MCF 10A (cell line): ENCODE measurements at regions of chr20 and their contacts with region 1.

Region 1: GRCh38 chr20:34768096-34768495 is 57.4 kb downstream of the NCOA6 start:
- DNase-seq: no peak
- H3K4me3 Mint-ChIP-seq: no peak overlapping the region
- H3K27ac Mint-ChIP-seq: no peak overlapping the region
- H3K4me1 Mint-ChIP-seq: peaks cover 6% of the 10 kb centered on the region
- H3K27me3 Mint-ChIP-seq: no peaks in the 10 kb centered on the region
- CTCF ChIP-seq: no peak

Region 2: GRCh38 chr20:34538671-34539123 is 229.4 kb before region 1 on chr20:
- CTCF ChIA-PET with region 1: interaction called, 6 read pairs
- POLR2A ChIA-PET with region 1: no interaction called
- intact Hi-C with region 1: loop called (anchors 1 kb)
- DNase-seq: peak; percentile 62
- H3K4me3 Mint-ChIP-seq: no peak overlapping the region
- H3K27ac Mint-ChIP-seq: no peak overlapping the region
- H3K4me1 Mint-ChIP-seq: no peaks in the 10 kb centered on the region
- H3K27me3 Mint-ChIP-seq: no peaks in the 10 kb centered on the region
- CTCF ChIP-seq: peak; percentile 75

Region 3: DNA sequence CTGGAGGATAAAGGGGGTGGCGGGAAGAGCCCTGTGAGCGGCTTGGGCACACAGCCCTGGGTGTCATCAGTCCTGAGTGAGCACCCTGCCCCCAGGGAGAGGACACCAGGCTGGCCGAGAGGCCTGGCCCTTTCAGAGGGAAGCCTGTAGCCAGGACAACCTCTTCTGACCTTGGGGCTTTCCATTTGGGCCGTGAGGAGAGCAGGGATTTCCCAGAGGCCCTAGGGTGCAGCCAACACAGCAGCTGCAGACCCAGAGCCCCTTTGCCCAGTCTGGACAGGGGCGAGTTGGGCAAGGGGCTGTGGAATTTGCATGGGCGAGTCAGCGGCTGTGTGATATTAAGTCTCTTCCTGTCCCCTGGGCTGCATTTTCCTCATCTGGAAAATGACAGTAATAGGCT is 203.3 kb before region 1 on chr20:
- CTCF ChIA-PET with region 1: interaction called, 11 read pairs
- POLR2A ChIA-PET with region 1: interaction called, 4 read pairs
- intact Hi-C with region 1: no loop called
- DNase-seq: no peak
- H3K4me3 Mint-ChIP-seq: no peak overlapping the region
- H3K27ac Mint-ChIP-seq: no peak overlapping the region
- H3K4me1 Mint-ChIP-seq: no peaks in the 10 kb centered on the region
- H3K27me3 Mint-ChIP-seq: no peaks in the 10 kb centered on the region
- CTCF ChIP-seq: no peak

Region 4: DNA sequence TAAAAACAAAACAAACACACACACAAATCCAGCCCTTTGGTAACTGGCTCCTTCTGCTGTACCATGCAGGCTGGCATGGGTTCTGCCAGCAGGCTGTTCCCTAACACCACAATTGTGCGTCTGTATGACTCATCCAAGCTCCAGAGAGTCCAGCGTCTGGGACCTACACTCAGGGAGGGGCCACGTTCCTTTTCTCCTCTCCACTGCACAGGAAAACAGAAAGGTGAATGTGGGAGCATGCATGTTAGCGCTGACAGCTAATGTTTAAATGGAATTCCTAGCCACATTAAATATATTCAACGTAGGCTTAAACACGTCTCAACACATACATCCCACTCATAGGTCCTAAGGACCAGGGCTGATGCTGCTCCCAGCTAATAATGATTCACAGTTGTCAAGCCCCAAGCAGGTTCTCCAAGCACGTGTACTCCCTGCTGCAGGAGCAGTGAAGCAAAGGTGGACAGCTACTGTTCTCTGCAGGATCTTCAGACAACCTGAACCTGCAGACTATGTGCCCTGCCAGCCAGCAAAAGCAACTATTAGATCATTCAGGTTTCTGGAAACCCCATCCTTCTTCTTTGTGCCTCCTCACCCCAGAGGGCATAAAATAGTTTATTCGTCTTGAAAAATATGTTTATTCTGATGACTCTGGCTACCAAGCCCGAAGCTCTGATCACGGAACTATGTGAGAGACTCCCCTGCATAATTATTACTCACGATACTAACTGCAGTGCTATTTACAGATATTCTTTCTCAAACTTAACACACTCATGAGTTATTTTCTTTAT is 188.7 kb before region 1 on chr20:
- CTCF ChIA-PET with region 1: interaction called, 136 read pairs
- POLR2A ChIA-PET with region 1: interaction called, 13 read pairs
- intact Hi-C with region 1: loop called (anchors 1 kb)
- DNase-seq: peak; percentile 88
- H3K4me3 Mint-ChIP-seq: peak overlapping the region; percentile 11
- H3K27ac Mint-ChIP-seq: no peak overlapping the region
- H3K4me1 Mint-ChIP-seq: no peaks in the 10 kb centered on the region
- H3K27me3 Mint-ChIP-seq: no peaks in the 10 kb centered on the region
- CTCF ChIP-seq: peak; percentile 87

Region 5: DNA sequence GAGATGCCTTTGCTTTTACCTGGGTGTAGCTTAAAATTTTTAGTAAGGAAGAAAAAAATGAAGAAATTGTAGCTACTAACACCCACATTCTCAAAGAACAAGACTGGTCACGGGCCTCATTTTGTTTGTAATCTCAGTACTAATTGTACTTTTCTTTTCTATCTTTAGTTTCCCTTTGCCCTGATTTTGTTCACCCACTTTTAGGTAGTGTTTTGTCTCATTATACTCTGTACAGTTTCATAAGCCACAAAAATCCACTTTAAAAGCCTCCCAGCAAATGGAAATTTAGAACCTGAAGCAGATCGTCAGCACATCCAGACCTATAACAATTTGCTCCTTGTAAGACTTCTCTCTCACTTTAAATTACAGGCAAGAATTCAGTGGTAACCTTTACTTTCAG is 20.6 kb before region 1 on chr20:
- CTCF ChIA-PET with region 1: interaction called, 14 read pairs
- POLR2A ChIA-PET with region 1: interaction called, 3 read pairs
- intact Hi-C with region 1: no loop called
- DNase-seq: no peak
- H3K4me3 Mint-ChIP-seq: no peak overlapping the region
- H3K27ac Mint-ChIP-seq: no peak overlapping the region
- H3K4me1 Mint-ChIP-seq: no peaks in the 10 kb centered on the region
- H3K27me3 Mint-ChIP-seq: no peaks in the 10 kb centered on the region
- CTCF ChIP-seq: no peak

Region 6: DNA sequence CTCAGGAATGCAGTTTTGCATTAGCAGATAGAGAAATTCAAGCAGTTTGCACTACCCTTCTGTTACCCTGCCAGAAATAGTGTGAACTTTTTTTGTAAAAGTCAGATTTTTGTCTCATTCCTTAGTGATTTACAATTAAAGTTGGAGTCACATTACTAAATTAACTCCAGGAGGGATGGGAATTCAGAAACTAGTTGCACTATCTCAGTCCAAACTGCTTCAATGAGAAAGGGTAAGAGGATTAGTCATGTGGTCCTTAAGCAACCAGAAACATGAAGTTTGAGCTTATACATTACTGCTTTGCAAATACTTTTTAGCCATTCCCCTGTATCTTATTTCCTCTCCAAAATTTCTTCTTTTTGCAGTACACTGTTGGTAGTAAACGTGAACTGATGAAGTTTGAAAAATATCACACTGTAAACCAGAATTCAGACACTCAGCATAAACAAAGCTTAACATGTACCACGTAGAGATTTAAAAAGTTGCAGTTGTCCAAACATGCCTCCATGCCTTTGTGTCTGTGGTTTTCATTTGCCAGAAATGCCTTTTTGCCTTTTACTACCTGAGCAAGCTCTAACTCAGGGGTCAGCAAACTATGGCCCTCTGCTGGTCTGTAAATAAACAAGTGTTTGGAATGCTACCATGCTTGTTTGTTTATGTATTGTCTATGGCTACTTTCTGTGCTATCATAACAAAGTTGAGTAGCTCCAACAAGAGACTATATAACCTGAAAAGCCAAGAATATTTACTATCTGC is 14.2 kb before region 1 on chr20:
- CTCF ChIA-PET with region 1: interaction called, 67 read pairs
- POLR2A ChIA-PET with region 1: interaction called, 7 read pairs
- intact Hi-C with region 1: no loop called
- DNase-seq: no peak
- H3K4me3 Mint-ChIP-seq: no peak overlapping the region
- H3K27ac Mint-ChIP-seq: no peak overlapping the region
- H3K4me1 Mint-ChIP-seq: no peaks in the 10 kb centered on the region
- H3K27me3 Mint-ChIP-seq: no peaks in the 10 kb centered on the region
- CTCF ChIP-seq: no peak

Region 7: GRCh38 chr20:34781220-34781619 is 13.1 kb after region 1 on chr20:
- CTCF ChIA-PET with region 1: interaction called, 18 read pairs
- POLR2A ChIA-PET with region 1: interaction called, 7 read pairs
- intact Hi-C with region 1: no loop called
- DNase-seq: no peak
- H3K4me3 Mint-ChIP-seq: no peak overlapping the region
- H3K27ac Mint-ChIP-seq: no peak overlapping the region
- H3K4me1 Mint-ChIP-seq: no peaks in the 10 kb centered on the region
- H3K27me3 Mint-ChIP-seq: no peaks in the 10 kb centered on the region
- CTCF ChIP-seq: no peak